ENCODE measurements at regions of chr19 and their contacts with region 1.

Region 1: DNA sequence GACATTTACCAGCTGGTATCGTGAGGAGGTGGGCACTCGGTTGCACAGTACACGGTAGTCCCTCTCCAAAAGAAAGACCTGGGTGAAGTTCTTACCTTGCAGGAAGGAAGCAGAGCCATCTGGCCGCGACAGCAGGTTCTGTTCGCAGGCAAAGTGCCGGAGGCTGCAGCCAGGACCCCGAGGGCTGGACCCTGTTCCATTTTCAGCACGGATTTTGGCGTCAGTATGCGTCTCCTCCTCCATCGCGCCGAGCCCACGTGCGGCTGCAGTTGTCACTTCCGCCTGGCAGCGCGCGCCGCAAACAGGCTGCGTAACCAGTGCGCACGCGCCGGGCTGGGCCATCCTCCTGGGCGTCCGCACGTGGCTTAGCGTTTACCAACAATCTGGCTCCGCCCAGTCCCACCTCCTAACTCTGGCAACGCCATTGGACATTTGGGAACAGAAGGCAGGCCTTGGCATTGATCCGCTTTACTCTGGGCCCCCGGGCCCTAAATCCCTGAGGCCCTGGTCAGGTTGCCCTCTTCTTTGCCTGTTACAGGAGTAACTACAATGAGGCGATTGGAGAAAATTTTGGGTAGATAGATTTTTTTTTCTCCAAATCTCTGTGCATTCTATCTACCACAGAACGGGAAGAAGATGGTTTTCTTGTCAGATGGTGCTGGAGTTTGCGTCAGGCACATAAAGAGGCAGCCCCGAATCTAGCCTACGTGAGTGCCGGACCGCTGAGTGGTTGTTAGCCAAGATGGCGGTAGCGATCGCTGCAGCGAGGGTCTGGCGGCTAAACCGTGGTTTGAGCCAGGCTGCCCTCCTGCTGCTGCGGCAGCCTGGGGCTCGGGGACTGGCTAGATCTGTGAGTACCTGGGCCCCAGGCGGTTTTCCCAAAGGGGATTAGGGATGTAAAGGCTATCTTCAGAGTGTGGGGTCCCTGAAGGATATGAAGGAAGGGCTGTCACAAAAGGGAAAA is at the starts of genes BCKDHA and EXOSC5:
- DNase-seq: peak; percentile 99
- H3K4me3 ChIP-seq: peak within 1 kb of the TSS; percentile 78 to 94 (median 87)
- H3K27ac ChIP-seq: peak within 1 kb of the TSS; percentile 86 to 94 (median 88)
- H3K4me1 ChIP-seq: peaks cover 28 to 53% (median 43%) of the 10 kb centered on the region in 4 donors
- H3K27me3 ChIP-seq: no peaks in the 10 kb centered on the region
- CTCF ChIP-seq: peak in 2 of 3 experiments; percentile 12 to 23
- EP300 ChIP-seq: no peak
- POLR2A ChIP-seq: peak; percentile 33
- total RNA-seq, gene BCKDHA: 40.7 to 75.2 (median 54.0) TPM
- total RNA-seq, gene EXOSC5: 11.2 to 15.2 (median 13.2) TPM

Region 2: DNA sequence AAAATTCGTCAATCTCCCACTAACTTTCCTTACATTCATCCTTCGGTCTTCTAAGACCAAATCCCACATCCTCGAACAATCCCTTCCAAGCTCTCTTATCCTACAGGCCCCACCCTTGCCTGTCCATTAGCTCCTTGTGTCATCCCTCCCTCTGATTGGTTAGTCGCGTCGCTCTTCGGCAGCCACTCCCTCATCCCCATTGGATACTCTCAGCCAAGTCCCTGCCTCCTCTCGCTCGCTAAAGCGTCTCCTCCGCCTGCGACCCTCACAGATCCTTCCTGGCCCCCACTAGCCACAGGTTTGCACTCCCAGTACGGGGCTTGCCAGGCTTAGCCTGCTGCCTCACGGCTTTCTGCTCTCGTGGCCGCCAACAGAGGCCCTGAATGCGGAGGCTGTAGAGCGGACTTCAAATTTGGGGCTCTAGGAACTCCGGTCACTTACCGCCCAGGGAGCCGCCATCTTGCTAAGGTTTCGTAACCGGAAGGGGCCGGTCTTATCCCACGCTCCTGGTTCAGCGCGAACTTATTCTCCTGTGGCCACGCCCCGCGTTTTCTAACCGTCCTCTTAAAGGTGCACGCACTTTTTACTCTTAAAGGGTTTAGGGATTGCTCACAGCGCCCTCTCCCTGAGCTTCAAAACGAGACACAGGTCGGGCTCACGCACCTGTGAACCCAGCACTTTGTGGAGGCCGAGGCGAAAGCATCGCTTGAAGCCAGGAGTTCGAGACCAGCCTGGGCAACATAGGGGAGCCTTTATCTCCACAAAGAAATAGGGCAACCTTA is 42.3 kb after region 1 on chr19 and contains the start of gene DMAC2:
- intact Hi-C with region 1: loop called (anchors 5 kb)
- DNase-seq: peak; percentile 100
- H3K4me3 ChIP-seq: peak within 1 kb of the TSS; percentile 68 to 79 (median 74)
- H3K27ac ChIP-seq: peak within 1 kb of the TSS; percentile 89 to 98 (median 94)
- H3K4me1 ChIP-seq: peaks cover 13 to 20% (median 16%) of the 10 kb centered on the region in 4 donors
- H3K27me3 ChIP-seq: peaks cover 0 to 37% (median 3%) of the 10 kb centered on the region in 4 donors
- CTCF ChIP-seq: peak; percentile 54 to 74 (median 57)
- EP300 ChIP-seq: no peak
- POLR2A ChIP-seq: peak; percentile 70
- total RNA-seq, gene DMAC2: 41.9 to 70.6 (median 61.2) TPM